Left cardiac atrium (tissue), 4 donors: ENCODE measurements at regions of chr20 and their contacts with region 1.

Region 1: DNA sequence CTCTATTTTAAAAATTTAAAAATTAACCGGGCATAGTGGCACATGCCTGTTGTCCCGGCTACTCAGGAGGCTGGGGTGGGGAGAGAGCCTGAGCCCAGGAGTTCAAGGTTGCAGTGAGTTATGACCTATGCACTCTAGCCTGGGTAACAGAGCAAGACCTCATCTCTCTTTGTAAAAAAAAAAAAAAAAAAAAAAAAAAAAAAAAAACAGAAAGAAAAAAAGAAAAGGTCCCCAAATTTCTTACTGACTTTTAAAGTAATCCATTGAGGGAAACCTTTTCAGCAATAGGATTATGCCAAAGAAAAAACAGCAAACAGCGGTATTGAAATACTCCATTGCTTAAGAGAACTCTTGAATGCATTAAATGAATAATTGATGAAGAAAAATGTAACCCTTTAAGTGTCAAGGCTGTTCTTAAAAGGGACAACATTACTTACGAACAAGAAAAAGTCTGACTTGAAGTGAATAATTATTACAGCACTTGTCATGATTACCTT is 6.0 kb upstream of the DNAAF9 start:
- DNase-seq: no peak
- ATAC-seq: no peak

Region 2: GRCh38 chr20:3465301-3465700 is 51.9 kb after region 1 on chr20:
- intact Hi-C with region 1: loop called in 1 of 2 experiments (anchors 5 kb)
- DNase-seq: no peak
- ATAC-seq: no peak